Activated T-helper 1 cell treated with anti-CD3 and anti-CD28 coated beads, Interleukin-12 subunit alpha, Interleukin-12 subunit beta, Interleukin-2, Interleukin-4 antibody, amounts not matched to agents 30 ng/mL and 10 ng/mL and 1 ng/mL, durations not matched to agents 14 hours and 24 hours and 36 hours (primary cell): ENCODE measurements at regions of chr14 and their contacts with region 1.

Region 1: DNA sequence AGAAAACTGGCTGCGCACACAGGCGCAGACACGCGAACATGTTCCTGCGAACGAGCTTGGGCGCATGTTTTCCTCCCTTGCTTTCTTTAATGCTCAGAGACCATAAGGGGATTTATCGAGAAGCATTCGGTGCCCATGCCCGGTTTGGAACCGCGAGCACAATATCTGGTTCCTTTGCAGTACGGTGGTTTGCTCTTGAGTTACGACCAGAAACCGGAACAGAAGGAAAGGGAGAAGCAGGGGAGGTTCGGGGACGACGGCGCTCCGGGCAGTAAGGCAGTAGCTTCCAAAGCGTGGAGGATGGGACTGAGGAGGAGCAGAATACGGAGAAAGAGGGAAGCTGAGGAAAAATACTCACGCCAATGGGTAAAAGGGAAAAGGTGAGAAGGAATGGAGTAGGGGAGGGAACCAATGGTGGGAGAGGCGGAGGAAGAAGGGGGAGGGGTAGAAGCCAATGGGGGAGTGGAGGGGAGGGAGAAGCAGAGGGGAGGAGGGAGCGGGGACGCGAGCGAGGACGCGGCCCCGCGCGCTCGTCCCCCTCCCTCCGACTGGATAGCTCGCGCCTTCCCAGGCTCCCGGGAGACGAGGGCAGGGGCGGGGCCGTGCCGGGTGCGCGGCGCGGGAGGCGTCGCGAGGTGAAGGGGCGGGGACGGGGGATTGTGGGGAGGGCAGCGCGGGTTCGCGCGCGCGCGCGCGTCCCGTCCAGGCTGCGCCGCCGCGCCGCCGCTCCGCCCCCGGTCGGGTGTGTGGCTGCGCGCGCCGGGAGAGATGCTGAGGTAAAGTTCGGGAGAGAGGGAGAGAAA is 625 bp upstream of the ARHGAP5 start:
- DNase-seq: peak; percentile 71
- H3K4me3 Mint-ChIP-seq: peak overlapping the region; percentile 96
- H3K27ac Mint-ChIP-seq: peak overlapping the region; percentile 96
- H3K4me1 Mint-ChIP-seq: peaks cover 42% of the 10 kb centered on the region
- H3K27me3 Mint-ChIP-seq: peaks cover 25% of the 10 kb centered on the region

Region 2: DNA sequence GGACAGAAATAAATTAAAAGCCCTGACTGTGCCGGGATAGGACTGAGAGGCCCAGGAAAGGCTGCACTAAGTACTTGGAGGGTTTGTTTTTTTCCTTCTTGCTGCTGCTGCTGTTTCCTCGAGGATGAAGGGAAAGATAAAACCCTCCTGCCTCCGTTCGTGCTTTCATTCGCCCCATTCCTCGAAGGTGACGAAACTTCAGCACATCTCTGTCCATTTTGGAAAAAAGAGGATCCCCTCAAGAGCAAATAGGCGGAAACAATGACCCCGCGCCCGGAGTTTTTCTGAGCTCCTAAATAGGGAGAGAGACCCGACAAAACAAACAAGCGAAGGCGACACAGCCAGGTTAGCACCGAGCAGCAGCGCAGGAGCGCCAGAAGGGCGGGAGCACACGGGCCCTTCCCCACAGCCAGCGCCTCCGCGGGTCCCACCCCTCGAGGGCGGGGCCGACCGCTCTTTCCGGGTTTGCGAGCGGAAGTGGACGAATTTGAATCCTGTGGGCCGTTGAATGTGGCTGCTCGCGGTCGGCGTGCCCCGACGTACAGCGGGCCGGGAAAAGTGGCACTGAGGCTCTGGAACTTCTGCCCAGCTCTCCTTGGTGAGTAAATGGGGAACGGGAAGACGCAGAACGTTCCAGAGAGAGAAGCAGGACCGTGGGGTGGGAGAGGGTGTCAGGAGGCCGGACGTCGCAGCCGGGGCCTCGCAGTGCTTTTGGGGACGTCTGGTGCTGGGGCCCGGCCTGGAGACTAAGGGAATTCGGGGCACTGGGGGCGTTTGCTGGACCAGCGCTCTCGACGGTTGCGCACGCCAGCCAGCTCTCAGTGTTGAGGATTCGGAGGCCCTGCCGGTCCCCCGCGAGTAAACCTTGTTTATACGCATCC is 1517.6 kb before region 1 on chr14 and contains the start of gene G2E3:
- intact Hi-C with region 1: loop called (anchors 5 kb)
- DNase-seq: peak; percentile 90
- H3K4me3 Mint-ChIP-seq: peak within 1 kb of the TSS; percentile 100
- H3K27ac Mint-ChIP-seq: peak within 1 kb of the TSS; percentile 99
- H3K4me1 Mint-ChIP-seq: peaks cover 33% of the 10 kb centered on the region
- H3K27me3 Mint-ChIP-seq: peaks cover 4% of the 10 kb centered on the region
- total RNA-seq, gene G2E3: 21.5 and 24.1 TPM in 2 replicates

Region 3: DNA sequence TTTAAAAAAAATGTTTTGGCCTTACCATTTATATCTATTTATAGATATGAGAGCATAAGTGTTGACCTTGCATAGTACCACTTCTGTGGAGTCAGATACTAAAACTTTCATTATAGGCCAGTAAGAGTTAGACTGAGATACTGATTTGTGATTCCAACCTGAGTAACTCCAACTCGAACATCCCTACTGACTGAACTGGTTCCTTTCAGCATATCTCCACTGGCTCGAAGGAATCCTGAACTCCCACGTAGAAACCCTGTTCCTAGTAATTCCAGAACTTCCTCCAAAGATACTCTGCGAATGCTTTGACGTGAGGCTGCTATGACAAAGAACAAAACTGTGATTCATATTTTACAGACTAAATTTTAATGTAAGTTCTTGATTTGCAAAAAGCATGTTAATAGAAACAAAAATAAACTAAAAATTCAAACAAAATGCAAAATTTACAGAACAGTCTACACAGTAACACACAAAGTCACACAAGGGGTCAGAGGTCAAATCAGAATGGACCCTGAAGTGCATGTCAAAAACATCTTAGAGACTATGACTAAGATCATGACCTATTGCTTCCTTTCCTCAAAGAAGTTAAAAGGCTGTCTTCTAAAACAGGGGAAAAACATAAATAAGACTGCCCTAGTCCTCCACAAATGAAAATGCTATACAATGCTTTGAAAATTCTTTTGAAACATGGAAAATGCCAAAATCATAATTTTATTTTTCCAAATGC is 687.6 kb before region 1 on chr14:
- intact Hi-C with region 1: loop called (anchors 10 kb)
- DNase-seq: no peak
- H3K4me3 Mint-ChIP-seq: peak overlapping the region; percentile 7
- H3K27ac Mint-ChIP-seq: peak overlapping the region; percentile 93
- H3K4me1 Mint-ChIP-seq: peaks cover 41% of the 10 kb centered on the region
- H3K27me3 Mint-ChIP-seq: no peaks in the 10 kb centered on the region

Region 4: GRCh38 chr14:31510222-31510621 is 566.3 kb before region 1 on chr14:
- intact Hi-C with region 1: loop called (anchors 1 kb)
- DNase-seq: no peak
- H3K4me3 Mint-ChIP-seq: no peak overlapping the region
- H3K27ac Mint-ChIP-seq: no peak overlapping the region
- H3K4me1 Mint-ChIP-seq: no peaks in the 10 kb centered on the region
- H3K27me3 Mint-ChIP-seq: peaks cover 4% of the 10 kb centered on the region

Region 5: DNA sequence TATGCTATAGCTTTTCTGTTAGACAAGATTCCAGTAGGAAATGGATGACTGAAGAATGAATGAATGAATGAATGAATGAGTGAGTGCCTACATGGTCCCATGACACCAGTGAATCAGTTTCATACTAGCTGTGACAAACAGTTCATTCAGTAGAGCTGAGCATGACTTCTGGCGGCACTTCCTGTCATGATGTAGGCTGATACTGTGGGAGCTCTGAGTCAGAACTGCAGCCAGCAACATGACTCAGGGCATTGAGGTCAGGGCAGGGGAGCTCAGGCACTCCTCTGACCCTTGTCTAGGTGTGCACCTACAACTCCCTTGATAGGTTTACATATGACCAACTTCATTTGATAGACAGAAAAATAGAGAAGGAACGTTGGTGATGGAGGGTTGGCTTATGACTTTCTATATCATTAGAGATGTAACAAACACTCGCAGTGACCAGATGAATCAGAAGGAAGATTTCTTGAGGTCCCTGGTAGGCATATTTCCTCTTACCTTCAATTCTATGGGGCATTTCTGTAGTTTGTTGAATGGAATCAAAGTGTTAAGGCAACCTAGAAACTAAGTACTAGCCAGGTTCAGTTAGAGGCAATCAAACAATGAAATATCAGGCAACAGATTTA is 138.6 kb before region 1 on chr14:
- intact Hi-C with region 1: loop called (anchors 2 kb)
- DNase-seq: peak; percentile 64
- H3K4me3 Mint-ChIP-seq: no peak overlapping the region
- H3K27ac Mint-ChIP-seq: peak overlapping the region; percentile 7
- H3K4me1 Mint-ChIP-seq: peaks cover 10% of the 10 kb centered on the region
- H3K27me3 Mint-ChIP-seq: peaks cover 3% of the 10 kb centered on the region

Region 6: DNA sequence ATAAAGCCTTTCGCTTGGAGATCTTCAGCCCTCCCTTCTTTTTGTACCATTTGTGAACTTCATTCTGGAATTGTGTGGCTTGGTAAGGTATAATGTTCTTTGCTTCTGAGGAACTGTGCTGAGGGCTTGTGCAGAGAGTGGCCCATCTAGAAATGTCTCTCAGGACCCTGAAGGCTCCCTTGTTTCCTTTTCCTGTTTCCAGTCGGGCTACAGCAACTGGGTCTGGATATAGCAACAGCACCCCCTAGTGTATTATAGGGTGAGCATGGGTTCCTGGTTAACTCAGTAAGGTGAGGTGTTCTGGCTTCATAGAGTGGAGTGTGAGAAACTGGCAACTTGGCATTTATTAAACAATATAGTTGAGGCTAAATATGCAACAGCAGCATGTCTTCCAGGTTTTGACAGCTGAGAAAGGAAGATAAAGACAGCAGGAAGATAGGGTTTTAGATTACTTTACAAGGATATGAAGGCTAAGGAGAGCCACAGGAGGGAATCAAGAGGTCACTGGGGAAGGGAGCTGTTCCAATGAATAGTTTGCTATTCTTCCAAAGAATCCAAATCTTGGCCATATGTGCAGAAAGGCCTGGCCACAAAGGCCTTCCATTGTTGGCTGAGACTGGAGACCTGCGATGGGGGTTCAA is 175.7 kb after region 1 on chr14:
- intact Hi-C with region 1: loop called (anchors 1 kb)
- DNase-seq: peak; percentile 35
- H3K4me3 Mint-ChIP-seq: no peak overlapping the region
- H3K27ac Mint-ChIP-seq: no peak overlapping the region
- H3K4me1 Mint-ChIP-seq: no peaks in the 10 kb centered on the region
- H3K27me3 Mint-ChIP-seq: no peaks in the 10 kb centered on the region